GM12878 (cell line): ENCODE measurements at regions of chr2 and their contacts with region 1.

Region 1: GRCh38 chr2:198004921-198005829 is 200.8 kb downstream of the PLCL1 start:
- DNase-seq: peak; percentile 87
- ATAC-seq: peak; percentile 86
- H3K4me3 ChIP-seq: peak overlapping the region; percentile 20; the same call in 1 of the 2 replicates
- H3K27ac ChIP-seq: peak overlapping the region; percentile 99
- H3K4me1 ChIP-seq: peaks cover 39% of the 10 kb centered on the region
- H3K27me3 ChIP-seq: no peaks in the 10 kb centered on the region
- CTCF ChIP-seq: no peak
- EP300 ChIP-seq: peak; percentile 72 to 89
- POLR2A ChIP-seq: no peak
- RAD21 ChIP-seq: peak; percentile 13; the same call in 1 of the 2 replicates

Region 2: GRCh38 chr2:197786010-197786877 is 218.9 kb before region 1 on chr2:
- CTCF ChIA-PET with region 1: no interaction called
- POLR2A ChIA-PET with region 1: no interaction called
- RAD21 ChIA-PET with region 1: no interaction called
- SMC1A ChIA-PET with region 1: no interaction called
- in situ Hi-C with region 1: no loop called
- intact Hi-C with region 1: no loop called
- DNase-seq: no peak
- ATAC-seq: peak; percentile 85
- H3K4me3 ChIP-seq: no peak overlapping the region
- H3K27ac ChIP-seq: no peak overlapping the region
- H3K4me1 ChIP-seq: no peaks in the 10 kb centered on the region
- H3K27me3 ChIP-seq: no peaks in the 10 kb centered on the region
- CTCF ChIP-seq: peak; percentile 47 to 78 (median 54)
- EP300 ChIP-seq: no peak
- POLR2A ChIP-seq: no peak
- RAD21 ChIP-seq: no peak

Region 3: GRCh38 chr2:197804049-197804757 is 201.0 kb before region 1 on chr2 and contains the start of gene PLCL1:
- CTCF ChIA-PET with region 1: interaction called, 6 read pairs
- POLR2A ChIA-PET with region 1: no interaction called
- RAD21 ChIA-PET with region 1: interaction called, 9 read pairs
- SMC1A ChIA-PET with region 1: no interaction called
- in situ Hi-C with region 1: no loop called
- intact Hi-C with region 1: loop called (anchors 5 kb)
- DNase-seq: peak; percentile 40
- ATAC-seq: peak; percentile 99
- H3K4me3 ChIP-seq: peak within 1 kb of the TSS; percentile 62
- H3K27ac ChIP-seq: no peak within 1 kb of the TSS
- H3K4me1 ChIP-seq: no peaks in the 10 kb centered on the region
- H3K27me3 ChIP-seq: peaks cover 4 to 19% of the 10 kb centered on the region in 2 experiments
- CTCF ChIP-seq: 0 out of 6 replicates have a peak, but pooled peaks of 1 of the 3 experiments have one; percentile 2
- EP300 ChIP-seq: no peak
- POLR2A ChIP-seq: no peak
- RAD21 ChIP-seq: no peak
- polyA plus RNA-seq, gene PLCL1: 0.03 to 0.05 TPM

Region 4: GRCh38 chr2:197889041-197889440 is 116.1 kb before region 1 on chr2:
- CTCF ChIA-PET with region 1: interaction called, 3 read pairs
- POLR2A ChIA-PET with region 1: interaction called, 4 read pairs
- RAD21 ChIA-PET with region 1: interaction called, 11 read pairs
- SMC1A ChIA-PET with region 1: interaction called, 21 read pairs
- in situ Hi-C with region 1: no loop called
- intact Hi-C with region 1: no loop called
- DNase-seq: peak; percentile 77
- ATAC-seq: peak; percentile 98
- H3K4me3 ChIP-seq: no peak overlapping the region
- H3K27ac ChIP-seq: peak overlapping the region; percentile 27; the same call in 1 of the 2 replicates
- H3K4me1 ChIP-seq: peaks cover 4% of the 10 kb centered on the region
- H3K27me3 ChIP-seq: no peaks in the 10 kb centered on the region
- CTCF ChIP-seq: no peak
- EP300 ChIP-seq: peak; percentile 37 to 83; a peak in 2 of 4 replicates
- POLR2A ChIP-seq: no peak
- RAD21 ChIP-seq: no peak

Region 5: DNA sequence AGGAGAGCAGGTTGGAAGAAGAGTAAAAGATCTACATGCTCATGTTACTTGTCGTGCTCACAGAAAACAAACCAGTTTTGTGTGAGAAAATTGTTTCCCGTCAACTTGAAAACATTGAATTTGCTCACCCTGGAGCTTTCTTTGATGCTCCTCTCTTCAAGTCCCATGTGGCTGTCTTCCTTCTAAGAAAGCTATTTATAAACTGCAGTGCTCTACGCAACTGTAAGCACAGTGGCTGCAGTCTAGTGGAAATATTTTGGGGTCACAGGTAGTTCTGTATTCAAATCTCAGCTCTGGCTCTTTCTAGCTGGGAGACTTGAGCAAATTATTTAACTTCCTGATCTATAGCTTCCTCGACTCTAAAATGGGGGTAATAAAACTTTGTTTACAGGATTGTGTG is 11.1 kb after region 1 on chr2:
- CTCF ChIA-PET with region 1: interaction called, 10 read pairs
- POLR2A ChIA-PET with region 1: interaction called, 3 read pairs
- RAD21 ChIA-PET with region 1: interaction called, 8 read pairs
- SMC1A ChIA-PET with region 1: interaction called, 22 read pairs
- in situ Hi-C with region 1: no loop called
- intact Hi-C with region 1: no loop called
- DNase-seq: no peak
- ATAC-seq: peak; percentile 21; the same call in 2 of the 3 replicates
- H3K4me3 ChIP-seq: no peak overlapping the region
- H3K27ac ChIP-seq: no peak overlapping the region
- H3K4me1 ChIP-seq: peaks cover 5% of the 10 kb centered on the region; the same call in 1 of the 2 replicates
- H3K27me3 ChIP-seq: no peaks in the 10 kb centered on the region
- CTCF ChIP-seq: no peak
- EP300 ChIP-seq: no peak
- POLR2A ChIP-seq: no peak
- RAD21 ChIP-seq: no peak

Region 6: GRCh38 chr2:198036029-198036879 is 31.1 kb after region 1 on chr2:
- CTCF ChIA-PET with region 1: interaction called, 3 read pairs
- POLR2A ChIA-PET with region 1: interaction called, 3 read pairs
- RAD21 ChIA-PET with region 1: interaction called, 19 read pairs
- SMC1A ChIA-PET with region 1: interaction called, 110 read pairs
- in situ Hi-C with region 1: no loop called
- intact Hi-C with region 1: loop called (anchors 5 kb)
- DNase-seq: no peak
- ATAC-seq: peak; percentile 97
- H3K4me3 ChIP-seq: no peak overlapping the region
- H3K27ac ChIP-seq: no peak overlapping the region
- H3K4me1 ChIP-seq: no peaks in the 10 kb centered on the region
- H3K27me3 ChIP-seq: no peaks in the 10 kb centered on the region
- CTCF ChIP-seq: no peak
- EP300 ChIP-seq: peak in 1 of 2 experiments; percentile 21; a peak in 1 of 4 replicates
- POLR2A ChIP-seq: no peak
- RAD21 ChIP-seq: no peak

Region 7: GRCh38 chr2:198053776-198054698 is 48.9 kb after region 1 on chr2:
- CTCF ChIA-PET with region 1: interaction called, 6 read pairs
- POLR2A ChIA-PET with region 1: no interaction called
- RAD21 ChIA-PET with region 1: interaction called, 7 read pairs
- SMC1A ChIA-PET with region 1: interaction called, 23 read pairs
- in situ Hi-C with region 1: no loop called
- intact Hi-C with region 1: no loop called
- DNase-seq: no peak
- ATAC-seq: peak; percentile 97
- H3K4me3 ChIP-seq: no peak overlapping the region
- H3K27ac ChIP-seq: no peak overlapping the region
- H3K4me1 ChIP-seq: no peaks in the 10 kb centered on the region
- H3K27me3 ChIP-seq: no peaks in the 10 kb centered on the region
- CTCF ChIP-seq: peak; percentile 47 to 65 (median 59)
- EP300 ChIP-seq: no peak
- POLR2A ChIP-seq: no peak
- RAD21 ChIP-seq: peak; percentile 80

Region 8: GRCh38 chr2:198220763-198221610 is 215.8 kb after region 1 on chr2:
- CTCF ChIA-PET with region 1: no interaction called
- POLR2A ChIA-PET with region 1: no interaction called
- RAD21 ChIA-PET with region 1: no interaction called
- SMC1A ChIA-PET with region 1: no interaction called
- in situ Hi-C with region 1: no loop called
- intact Hi-C with region 1: no loop called
- DNase-seq: no peak
- ATAC-seq: no peak
- H3K4me3 ChIP-seq: no peak overlapping the region
- H3K27ac ChIP-seq: no peak overlapping the region
- H3K4me1 ChIP-seq: no peaks in the 10 kb centered on the region
- H3K27me3 ChIP-seq: no peaks in the 10 kb centered on the region
- CTCF ChIP-seq: no peak
- EP300 ChIP-seq: no peak
- POLR2A ChIP-seq: no peak
- RAD21 ChIP-seq: no peak